ENCODE measurements at regions of chr11 and their contacts with region 1.

Region 1: GRCh38 chr11:118901494-118902335 is 18.0 kb downstream of the CXCR5 start:
- DNase-seq: no peak
- H3K4me3 ChIP-seq: no peak overlapping the region
- H3K27ac ChIP-seq: peak overlapping the region in 1 of 4 donors; percentile 22
- H3K4me1 ChIP-seq: peaks cover 0 to 54% (median 34%) of the 10 kb centered on the region in 4 donors
- H3K27me3 ChIP-seq: peaks cover 0 to 3% (median 0%) of the 10 kb centered on the region in 4 donors
- CTCF ChIP-seq: peak in 1 of 3 experiments; percentile 8
- EP300 ChIP-seq: no peak
- POLR2A ChIP-seq: no peak

Region 2: GRCh38 chr11:118791111-118791965 is 110.4 kb before region 1 on chr11 and contains the start of gene DDX6:
- intact Hi-C with region 1: no loop called
- DNase-seq: peak; percentile 97
- H3K4me3 ChIP-seq: peak within 1 kb of the TSS; percentile 79 to 92 (median 86)
- H3K27ac ChIP-seq: peak within 1 kb of the TSS; percentile 98 to 100 (median 99)
- H3K4me1 ChIP-seq: peaks cover 23 to 47% (median 44%) of the 10 kb centered on the region in 4 donors
- H3K27me3 ChIP-seq: no peaks in the 10 kb centered on the region
- CTCF ChIP-seq: peak in 2 of 3 experiments; percentile 32 to 38
- EP300 ChIP-seq: no peak
- POLR2A ChIP-seq: peak; percentile 80
- total RNA-seq, gene DDX6: 92.9 to 113 (median 105) TPM

Region 3: DNA sequence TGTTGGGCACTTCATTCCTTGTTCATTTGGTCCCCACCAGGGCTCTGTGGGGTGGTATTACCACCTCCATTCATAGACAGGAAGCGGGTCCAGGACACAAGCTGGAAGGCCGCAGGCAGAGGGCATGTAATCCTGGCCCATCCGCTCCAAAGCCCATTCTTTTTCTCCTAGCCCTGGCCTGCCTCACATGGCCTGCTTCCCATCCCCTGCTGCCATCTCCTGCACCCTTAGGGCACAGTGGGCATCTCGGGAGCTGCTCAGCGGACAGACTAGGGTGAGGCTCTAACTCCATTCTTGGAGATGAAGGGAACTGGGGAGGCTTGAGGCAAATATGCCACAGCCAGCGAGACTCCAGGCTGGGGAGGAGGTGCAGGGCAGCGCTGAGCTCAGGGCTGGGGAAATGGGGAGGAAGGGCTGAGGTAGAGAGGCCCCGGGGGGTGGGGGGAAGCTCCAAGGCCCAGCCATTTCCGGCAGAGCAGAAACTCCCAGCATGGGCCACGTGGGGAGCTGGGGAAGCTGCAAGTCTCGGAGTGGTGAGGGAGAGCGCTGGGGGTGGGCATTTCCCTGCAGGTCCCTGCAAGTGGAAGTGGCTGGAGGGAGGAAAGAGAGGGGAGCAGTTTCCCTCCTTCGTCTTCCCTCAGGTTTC is 38.4 kb after region 1 on chr11:
- intact Hi-C with region 1: loop called (anchors 5 kb)
- DNase-seq: no peak
- H3K4me3 ChIP-seq: no peak overlapping the region
- H3K27ac ChIP-seq: no peak overlapping the region
- H3K4me1 ChIP-seq: no peaks in the 10 kb centered on the region
- H3K27me3 ChIP-seq: peaks cover 0 to 7% (median 0%) of the 10 kb centered on the region in 4 donors
- CTCF ChIP-seq: no peak
- EP300 ChIP-seq: no peak
- POLR2A ChIP-seq: no peak

Region 4: GRCh38 chr11:119084663-119085436 is 183.1 kb after region 1 on chr11 and contains the start of gene HMBS:
- intact Hi-C with region 1: no loop called
- DNase-seq: peak; percentile 99
- H3K4me3 ChIP-seq: peak within 1 kb of the TSS; percentile 82 to 97 (median 85)
- H3K27ac ChIP-seq: peak within 1 kb of the TSS; percentile 95 to 96 (median 96)
- H3K4me1 ChIP-seq: peaks cover 15 to 21% (median 17%) of the 10 kb centered on the region in 4 donors
- H3K27me3 ChIP-seq: no peaks in the 10 kb centered on the region
- CTCF ChIP-seq: peak in 1 of 3 experiments; percentile 6
- EP300 ChIP-seq: no peak
- POLR2A ChIP-seq: no peak
- total RNA-seq, gene HMBS: 3.1 to 7.8 (median 6.1) TPM

Region 5: GRCh38 chr11:119101759-119102423 is 200.2 kb after region 1 on chr11 and contains the start of gene DPAGT1:
- intact Hi-C with region 1: no loop called
- DNase-seq: peak; percentile 97
- H3K4me3 ChIP-seq: peak within 1 kb of the TSS; percentile 77 to 80 (median 78)
- H3K27ac ChIP-seq: peak within 1 kb of the TSS; percentile 84 to 93 (median 88)
- H3K4me1 ChIP-seq: peaks cover 38 to 45% (median 40%) of the 10 kb centered on the region in 4 donors
- H3K27me3 ChIP-seq: no peaks in the 10 kb centered on the region
- CTCF ChIP-seq: peak in 1 of 3 experiments; percentile 2
- EP300 ChIP-seq: no peak
- POLR2A ChIP-seq: no peak
- total RNA-seq, gene DPAGT1: 14.2 to 28.7 (median 19.9) TPM

Measured in esophagus muscularis mucosa (tissue), 4 donors.